ENCODE measurements at regions of chr12 and their contacts with region 1.

Region 1: DNA sequence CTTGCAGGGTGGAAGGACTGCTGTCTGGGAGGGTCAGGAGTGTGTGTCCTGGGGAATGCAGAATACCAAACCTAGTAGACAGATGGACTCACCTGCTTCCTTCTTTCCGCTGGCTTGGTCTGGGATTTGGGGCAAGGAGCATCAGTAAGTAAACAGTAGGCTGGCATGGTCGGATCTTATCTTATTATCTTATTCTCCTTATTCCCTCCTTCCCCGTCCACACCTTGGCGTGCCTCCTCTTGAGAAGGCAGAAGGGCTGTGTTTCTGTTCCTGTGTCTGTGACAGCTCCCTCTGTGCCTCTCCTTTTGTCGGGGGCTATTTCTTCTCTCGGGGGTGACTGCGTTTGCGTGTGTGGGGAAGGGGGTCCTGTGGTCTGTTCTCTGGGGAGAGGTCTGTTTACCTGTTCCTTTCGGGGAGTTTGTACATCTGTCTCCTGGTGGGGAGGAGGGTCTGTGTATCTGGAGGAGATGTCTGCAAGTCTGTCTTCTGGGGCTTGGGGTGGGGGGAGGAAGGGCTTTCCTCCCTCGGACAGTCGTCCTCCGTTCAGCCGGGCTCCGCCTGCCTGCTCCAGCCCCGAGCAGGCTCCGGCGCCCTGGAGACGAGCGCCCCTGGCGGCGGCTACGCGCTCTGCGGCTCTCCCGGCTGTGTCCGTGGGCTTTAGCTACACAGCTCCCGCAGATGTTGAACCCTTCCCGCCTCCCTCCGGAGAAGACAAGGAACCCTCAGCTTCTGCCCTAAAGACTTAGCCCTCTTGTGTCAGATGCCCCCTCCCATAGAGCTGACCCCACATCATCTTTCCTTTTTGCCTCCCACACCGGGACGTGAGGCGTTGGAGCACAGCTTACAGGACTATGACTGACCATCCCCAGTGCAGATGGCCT is 4.3 kb downstream of the KRT86 start:
- H3K4me3 ChIP-seq: no peak overlapping the region
- H3K27ac ChIP-seq: no peak overlapping the region
- H3K4me1 ChIP-seq: no peaks in the 10 kb centered on the region; the same call in 1 of the 2 replicates
- CTCF ChIP-seq: peak; percentile 81

Region 2: DNA sequence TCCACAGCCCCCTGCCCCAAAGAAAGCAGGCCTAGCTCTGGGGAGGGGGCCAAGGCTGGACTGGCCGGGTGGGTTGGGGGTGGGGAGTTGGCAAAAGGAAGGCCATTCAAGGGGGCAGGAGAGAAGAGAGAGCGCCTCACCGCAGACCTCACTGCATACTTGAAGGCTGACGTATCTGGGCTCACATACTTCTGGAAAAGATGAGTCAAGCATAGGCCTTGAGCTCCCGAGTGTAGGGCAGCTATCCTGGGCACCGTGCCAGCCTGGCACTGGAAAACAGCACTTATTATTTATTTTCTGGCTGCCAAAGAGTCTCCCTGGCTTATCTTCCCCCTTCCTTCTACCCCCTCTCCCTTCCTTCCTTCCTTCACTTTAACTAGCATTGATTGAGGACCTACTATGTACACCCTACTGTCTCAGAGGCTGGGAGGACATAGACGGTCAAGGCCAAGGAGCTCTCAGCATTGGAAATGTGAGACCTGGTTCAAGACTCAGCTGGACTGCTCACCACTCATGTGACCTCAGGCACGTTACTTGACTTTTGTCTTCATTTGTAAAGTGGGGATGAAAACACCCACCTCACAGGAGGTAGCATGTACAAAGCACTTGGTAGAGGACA is 86.5 kb before region 1 on chr12:
- CTCF ChIA-PET with region 1: interaction called, 11 read pairs
- POLR2A ChIA-PET with region 1: interaction called, 5 read pairs
- H3K4me3 ChIP-seq: no peak overlapping the region; the same call in 1 of the 2 replicates
- H3K27ac ChIP-seq: no peak overlapping the region
- H3K4me1 ChIP-seq: peaks cover 2% of the 10 kb centered on the region; the same call in 1 of the 2 replicates
- CTCF ChIP-seq: no peak

Region 3: GRCh38 chr12:52221912-52222457 is 56.8 kb before region 1 on chr12:
- CTCF ChIA-PET with region 1: interaction called, 60 read pairs
- POLR2A ChIA-PET with region 1: no interaction called
- H3K4me3 ChIP-seq: no peak overlapping the region
- H3K27ac ChIP-seq: no peak overlapping the region
- H3K4me1 ChIP-seq: no peaks in the 10 kb centered on the region
- CTCF ChIP-seq: peak; percentile 60

Region 4: DNA sequence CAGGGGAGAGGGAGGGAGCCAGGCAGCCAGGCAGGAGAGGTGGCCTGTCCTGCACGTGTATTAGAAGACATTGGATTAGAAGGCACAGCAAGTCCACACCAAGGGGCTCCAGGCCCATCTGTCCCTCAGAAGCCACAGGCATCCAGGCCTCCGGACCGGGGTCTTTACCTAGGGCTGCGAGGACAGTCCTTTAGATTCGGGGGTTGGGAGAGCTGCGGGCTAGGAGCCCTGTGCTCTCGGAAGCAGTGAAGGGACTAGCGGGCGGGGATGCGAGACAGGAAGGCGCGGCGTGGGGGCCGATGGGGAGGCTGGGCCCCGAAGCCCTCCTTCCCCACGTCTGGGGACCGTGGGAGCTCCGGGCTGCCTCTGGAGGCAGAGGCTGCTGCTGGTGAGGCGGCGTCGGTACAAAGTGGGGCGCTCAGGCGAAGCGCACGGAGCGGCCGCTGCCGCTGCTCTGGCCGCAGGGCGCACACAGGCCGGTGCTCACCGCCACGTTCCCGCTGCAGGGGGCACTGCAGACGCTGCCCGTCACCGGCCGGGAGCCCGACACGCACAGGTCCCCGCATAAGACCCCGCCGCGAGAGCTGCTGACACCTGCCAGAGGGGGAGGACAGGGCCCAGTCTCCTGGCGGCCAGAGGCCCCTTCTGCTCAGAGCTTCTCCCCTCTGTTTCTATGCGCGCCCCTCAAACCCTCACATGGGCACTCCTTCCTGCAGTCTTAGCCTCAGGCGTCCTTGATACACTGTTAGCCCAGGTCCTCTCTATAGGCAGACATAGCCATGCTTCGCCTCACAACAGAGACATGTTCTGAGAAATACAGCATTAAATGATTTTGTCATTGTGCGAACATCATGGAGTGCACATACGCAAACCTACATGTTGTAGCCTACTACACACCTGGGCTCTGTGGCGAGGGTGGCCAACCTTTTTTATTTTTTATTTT is 28.5 kb before region 1 on chr12:
- CTCF ChIA-PET with region 1: interaction called, 18 read pairs
- POLR2A ChIA-PET with region 1: no interaction called
- H3K4me3 ChIP-seq: no peak overlapping the region
- H3K27ac ChIP-seq: no peak overlapping the region
- H3K4me1 ChIP-seq: peaks cover 11% of the 10 kb centered on the region; the same call in 1 of the 2 replicates
- CTCF ChIP-seq: no peak

Region 5: GRCh38 chr12:52307836-52308805 is 29.3 kb after region 1 on chr12:
- CTCF ChIA-PET with region 1: interaction called, 21 read pairs
- POLR2A ChIA-PET with region 1: interaction called, 6 read pairs
- H3K4me3 ChIP-seq: peak overlapping the region; percentile 7
- H3K27ac ChIP-seq: no peak overlapping the region
- H3K4me1 ChIP-seq: no peaks in the 10 kb centered on the region
- CTCF ChIP-seq: peak; percentile 74